ENCODE measurements at regions of chr21 and their contacts with region 1.

Region 1: GRCh38 chr21:33924079-33924765 is 8.6 kb upstream of the ATP5PO start:
- DNase-seq: peak; percentile 75
- ATAC-seq: peak; percentile 99
- H3K4me3 Mint-ChIP-seq: peak overlapping the region; percentile 33
- H3K27ac Mint-ChIP-seq: no peak overlapping the region
- H3K4me1 Mint-ChIP-seq: peaks cover 6% of the 10 kb centered on the region
- H3K27me3 Mint-ChIP-seq: no peaks in the 10 kb centered on the region
- CTCF ChIP-seq: peak; percentile 88

Region 2: DNA sequence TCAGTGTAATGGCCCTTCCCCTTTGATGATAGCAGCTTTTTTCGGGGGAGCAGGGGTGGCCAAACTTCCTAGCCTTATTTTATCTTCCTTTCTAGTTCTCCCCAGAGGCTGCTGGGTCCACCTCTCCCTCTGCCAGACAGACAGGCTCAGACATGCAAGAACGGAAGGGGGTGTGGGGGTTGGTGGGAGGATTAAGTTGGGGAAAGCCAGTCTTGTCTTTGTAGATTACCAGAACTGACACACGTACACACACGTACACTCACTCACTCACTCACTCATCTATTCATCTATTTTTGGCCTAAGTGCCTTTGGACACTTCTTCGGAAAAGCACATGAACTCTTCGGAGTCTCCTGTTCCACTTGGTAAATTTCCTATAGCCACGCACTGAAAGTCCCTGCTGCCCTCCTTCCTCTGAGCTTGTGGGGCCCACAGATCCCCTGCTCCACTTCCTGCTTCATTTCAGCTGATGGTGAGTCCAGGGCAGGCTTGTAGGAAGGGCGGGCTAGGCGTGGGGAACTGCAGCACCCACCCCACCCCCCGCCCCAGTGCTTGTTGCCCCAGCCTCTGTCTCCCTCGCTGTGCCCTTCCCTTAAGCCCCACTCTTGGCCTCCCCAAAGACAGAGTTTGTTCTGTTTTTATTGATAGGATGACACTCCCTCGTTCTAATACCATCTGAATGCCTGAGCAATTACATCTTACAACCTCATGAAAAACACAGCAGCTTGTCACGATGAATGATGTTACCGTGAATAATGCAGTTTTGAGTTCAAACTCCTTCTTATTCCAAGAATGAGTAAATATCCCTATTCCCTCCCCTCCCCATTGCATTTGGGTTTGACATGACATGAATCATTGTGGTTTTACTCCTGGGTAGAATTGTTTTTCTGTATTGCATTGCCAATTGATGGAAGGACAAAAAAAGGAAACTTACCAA is 52.1 kb after region 1 on chr21:
- CTCF ChIA-PET with region 1: interaction called, 11 read pairs
- POLR2A ChIA-PET with region 1: interaction called, 3 read pairs
- intact Hi-C with region 1: loop called (anchors 2 kb)
- DNase-seq: no peak
- ATAC-seq: peak; percentile 49
- H3K4me3 Mint-ChIP-seq: peak overlapping the region; percentile 66
- H3K27ac Mint-ChIP-seq: peak overlapping the region; percentile 90
- H3K4me1 Mint-ChIP-seq: peaks cover 36% of the 10 kb centered on the region
- H3K27me3 Mint-ChIP-seq: no peaks in the 10 kb centered on the region
- CTCF ChIP-seq: no peak

Region 3: GRCh38 chr21:34061983-34062382 is 137.8 kb after region 1 on chr21:
- CTCF ChIA-PET with region 1: no interaction called
- POLR2A ChIA-PET with region 1: no interaction called
- intact Hi-C with region 1: no loop called
- DNase-seq: no peak
- ATAC-seq: peak; percentile 50
- H3K4me3 Mint-ChIP-seq: no peak overlapping the region
- H3K27ac Mint-ChIP-seq: no peak overlapping the region
- H3K4me1 Mint-ChIP-seq: no peaks in the 10 kb centered on the region
- H3K27me3 Mint-ChIP-seq: no peaks in the 10 kb centered on the region
- CTCF ChIP-seq: no peak

Region 4: DNA sequence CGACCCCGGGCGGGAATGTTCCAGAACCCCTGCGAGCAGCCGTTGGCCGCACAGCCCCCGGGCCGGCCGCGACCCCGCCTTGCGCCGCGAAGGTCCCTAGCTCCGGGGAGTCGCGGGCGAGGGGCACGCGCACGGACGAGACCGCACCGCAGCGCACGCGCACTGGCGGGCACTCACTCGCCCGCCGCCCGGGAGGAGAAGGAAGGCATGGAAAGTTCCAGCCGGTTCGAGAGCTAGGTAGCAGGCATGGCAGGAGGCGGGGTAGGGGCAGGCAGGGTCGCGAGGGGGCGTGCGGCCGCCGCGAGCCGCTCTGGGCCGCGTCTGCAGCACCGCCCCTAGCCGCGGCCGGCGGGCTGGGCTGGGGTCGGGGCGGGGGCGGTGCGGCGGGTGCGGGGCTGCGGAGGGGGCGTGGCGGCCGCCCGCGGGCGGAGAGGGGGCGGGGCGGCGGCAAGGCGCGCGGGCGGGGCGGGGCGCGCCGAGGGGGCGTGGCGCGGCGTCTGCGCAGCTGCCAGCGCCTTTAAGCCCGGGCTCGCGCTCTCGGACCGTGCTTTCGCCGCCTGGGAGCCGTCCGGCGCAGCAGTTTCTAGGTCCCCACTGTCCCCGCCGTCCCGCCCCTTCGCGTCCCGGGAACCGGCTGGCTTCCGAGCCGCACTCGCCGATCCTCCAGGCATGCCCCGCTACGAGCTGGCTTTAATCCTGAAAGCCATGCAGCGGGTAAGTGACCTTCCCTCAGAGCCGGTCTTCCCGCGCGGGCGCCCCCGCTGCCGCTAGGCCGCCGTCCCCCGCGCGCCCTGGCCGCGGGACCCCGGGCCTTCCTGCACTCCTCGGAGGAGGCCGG is 149.0 kb after region 1 on chr21 and contains the starts of genes MRPS6 and SLC5A3:
- CTCF ChIA-PET with region 1: interaction called, 16 read pairs
- POLR2A ChIA-PET with region 1: interaction called, 4 read pairs
- intact Hi-C with region 1: loop called (anchors 2 kb)
- DNase-seq: peak; percentile 80
- ATAC-seq: peak; percentile 82
- H3K4me3 Mint-ChIP-seq: peak within 1 kb of the TSS; percentile 92
- H3K27ac Mint-ChIP-seq: peak within 1 kb of the TSS; percentile 84
- H3K4me1 Mint-ChIP-seq: peaks cover 42% of the 10 kb centered on the region
- H3K27me3 Mint-ChIP-seq: no peaks in the 10 kb centered on the region
- CTCF ChIP-seq: no peak
- total RNA-seq, gene MRPS6: 40.2 and 40.5 TPM in 2 replicates
- total RNA-seq, gene SLC5A3: 7.7 and 9.0 TPM in 2 replicates

Region 5: GRCh38 chr21:34202553-34203372 is 278.5 kb after region 1 on chr21:
- CTCF ChIA-PET with region 1: interaction called, 34 read pairs
- POLR2A ChIA-PET with region 1: no interaction called
- intact Hi-C with region 1: loop called (anchors 1 kb)
- DNase-seq: no peak
- ATAC-seq: no peak
- H3K4me3 Mint-ChIP-seq: peak overlapping the region; percentile 67
- H3K27ac Mint-ChIP-seq: no peak overlapping the region
- H3K4me1 Mint-ChIP-seq: peaks cover 22% of the 10 kb centered on the region
- H3K27me3 Mint-ChIP-seq: peaks cover 12% of the 10 kb centered on the region
- CTCF ChIP-seq: no peak

Region 6: DNA sequence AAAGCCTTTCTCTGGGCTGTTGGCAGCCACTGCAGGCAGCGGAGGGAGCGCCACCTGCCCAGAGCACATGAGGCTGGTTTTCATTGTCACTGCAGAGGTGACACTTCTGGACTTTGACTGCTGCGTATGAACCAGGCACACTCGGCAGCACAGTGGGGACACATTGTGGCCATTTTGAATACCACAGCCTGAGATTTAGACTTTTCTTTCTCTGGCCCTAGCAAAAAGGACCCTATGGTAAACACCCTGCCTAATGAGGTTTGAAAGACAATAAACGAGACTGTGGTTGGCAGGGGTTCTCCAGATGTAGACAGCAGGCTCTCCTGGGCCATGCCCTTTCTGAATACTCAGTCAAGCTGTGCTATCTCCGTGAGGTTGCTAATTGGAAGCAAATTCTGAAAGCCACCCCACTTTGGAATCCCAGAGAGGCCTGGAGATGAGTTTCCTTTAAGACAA is 427.6 kb after region 1 on chr21:
- CTCF ChIA-PET with region 1: interaction called, 431 read pairs
- POLR2A ChIA-PET with region 1: interaction called, 17 read pairs
- intact Hi-C with region 1: loop called (anchors 1 kb)
- DNase-seq: no peak
- ATAC-seq: peak; percentile 80
- H3K4me3 Mint-ChIP-seq: no peak overlapping the region
- H3K27ac Mint-ChIP-seq: no peak overlapping the region
- H3K4me1 Mint-ChIP-seq: peaks cover 3% of the 10 kb centered on the region
- H3K27me3 Mint-ChIP-seq: peaks cover 29% of the 10 kb centered on the region
- CTCF ChIP-seq: no peak

Region 7: DNA sequence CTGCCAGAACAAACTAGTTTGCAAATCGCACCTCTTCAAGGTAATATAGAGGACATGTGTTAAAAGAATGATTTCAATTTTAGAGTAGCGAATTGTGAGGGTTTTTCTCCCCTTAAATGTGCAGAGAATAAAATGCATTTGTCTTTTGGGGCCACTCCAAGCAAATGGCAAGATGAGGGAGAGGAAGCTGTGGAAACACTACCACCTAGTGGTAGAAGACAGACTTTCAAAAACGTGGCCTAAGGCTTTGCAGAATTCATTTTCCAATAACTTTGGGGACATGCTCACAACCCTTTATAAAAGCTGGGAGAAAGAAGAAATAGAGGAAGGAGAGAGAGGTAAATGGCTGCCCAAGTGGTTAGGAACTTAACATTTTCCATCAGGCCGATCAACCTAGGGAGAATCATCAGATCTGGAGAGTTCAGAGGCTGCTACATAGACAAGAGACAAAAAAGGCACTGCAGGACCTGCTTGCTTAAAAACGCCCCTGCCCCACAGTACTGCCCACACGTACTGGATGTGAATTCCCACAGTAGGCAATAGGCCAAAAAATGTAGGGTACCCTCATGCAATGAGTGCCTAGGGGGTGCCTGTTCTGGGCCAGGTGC is 706.4 kb after region 1 on chr21:
- CTCF ChIA-PET with region 1: interaction called, 5 read pairs
- POLR2A ChIA-PET with region 1: no interaction called
- intact Hi-C with region 1: loop called (anchors 2 kb)
- DNase-seq: no peak
- ATAC-seq: peak; percentile 75
- H3K4me3 Mint-ChIP-seq: no peak overlapping the region
- H3K27ac Mint-ChIP-seq: no peak overlapping the region
- H3K4me1 Mint-ChIP-seq: no peaks in the 10 kb centered on the region
- H3K27me3 Mint-ChIP-seq: peaks cover 8% of the 10 kb centered on the region
- CTCF ChIP-seq: no peak